Calu3 (cell line): ENCODE measurements at regions of chr16 and their contacts with region 1.

Region 1: GRCh38 chr16:52191531-52192134 is 355.3 kb downstream of the TOX3 start:
- DNase-seq: peak; percentile 80
- H3K4me3 Mint-ChIP-seq: no peak overlapping the region
- H3K27ac Mint-ChIP-seq: no peak overlapping the region
- H3K4me1 Mint-ChIP-seq: peaks cover 11% of the 10 kb centered on the region
- H3K27me3 Mint-ChIP-seq: no peaks in the 10 kb centered on the region
- CTCF ChIP-seq: peak; percentile 89

Region 2: DNA sequence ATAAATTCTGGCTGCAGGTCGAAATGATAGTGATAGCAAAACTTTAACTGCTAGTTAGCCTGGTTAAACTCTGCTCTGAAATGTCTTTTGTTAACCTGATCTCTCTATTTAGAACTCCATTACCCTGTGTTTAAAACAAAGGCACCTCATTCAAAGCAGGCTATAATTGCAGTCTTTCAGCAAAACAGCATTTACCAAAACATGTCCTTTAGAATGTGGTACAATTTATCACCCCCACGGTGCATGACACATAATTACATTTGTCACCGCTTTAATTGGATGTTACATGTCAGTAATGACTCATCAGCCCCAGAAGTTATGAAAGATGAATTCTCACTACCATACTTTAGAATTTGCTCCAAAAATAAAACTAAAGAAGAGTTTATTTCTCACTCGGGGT is 59.9 kb after region 1 on chr16:
- CTCF ChIA-PET with region 1: interaction called, 9 read pairs
- intact Hi-C with region 1: loop called (anchors 2 kb)
- DNase-seq: no peak
- H3K4me3 Mint-ChIP-seq: no peak overlapping the region
- H3K27ac Mint-ChIP-seq: no peak overlapping the region
- H3K4me1 Mint-ChIP-seq: peaks cover 55% of the 10 kb centered on the region
- H3K27me3 Mint-ChIP-seq: no peaks in the 10 kb centered on the region
- CTCF ChIP-seq: no peak

Region 3: DNA sequence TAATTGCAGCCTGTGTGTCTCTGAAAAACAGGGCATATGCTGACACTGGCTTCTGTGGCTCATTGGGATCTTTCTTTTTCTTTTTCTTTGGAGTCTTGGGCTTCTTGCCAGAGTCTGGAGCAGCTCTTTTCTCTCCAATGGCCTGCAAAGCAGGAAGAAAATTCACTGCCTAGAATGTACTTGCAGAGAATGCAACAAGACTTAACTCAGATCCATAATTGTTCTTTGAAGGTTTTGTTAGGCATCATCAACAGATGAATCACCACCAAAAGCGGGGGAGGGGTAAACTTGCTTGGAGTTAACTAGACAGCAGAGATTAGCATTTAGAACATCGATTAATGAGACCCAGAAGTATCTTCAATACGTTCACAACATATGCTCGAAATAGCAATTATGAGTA is 254.4 kb after region 1 on chr16:
- CTCF ChIA-PET with region 1: interaction called, 3 read pairs
- intact Hi-C with region 1: loop called (anchors 5 kb)
- DNase-seq: peak; percentile 43
- H3K4me3 Mint-ChIP-seq: no peak overlapping the region
- H3K27ac Mint-ChIP-seq: no peak overlapping the region
- H3K4me1 Mint-ChIP-seq: peaks cover 45% of the 10 kb centered on the region
- H3K27me3 Mint-ChIP-seq: no peaks in the 10 kb centered on the region
- CTCF ChIP-seq: no peak

Region 4: GRCh38 chr16:52553322-52553721 is 361.7 kb after region 1 on chr16:
- CTCF ChIA-PET with region 1: no interaction called
- intact Hi-C with region 1: no loop called
- DNase-seq: no peak
- H3K4me3 Mint-ChIP-seq: no peak overlapping the region
- H3K27ac Mint-ChIP-seq: no peak overlapping the region
- H3K4me1 Mint-ChIP-seq: peaks cover 54% of the 10 kb centered on the region
- H3K27me3 Mint-ChIP-seq: no peaks in the 10 kb centered on the region
- CTCF ChIP-seq: peak; percentile 59

Region 5: DNA sequence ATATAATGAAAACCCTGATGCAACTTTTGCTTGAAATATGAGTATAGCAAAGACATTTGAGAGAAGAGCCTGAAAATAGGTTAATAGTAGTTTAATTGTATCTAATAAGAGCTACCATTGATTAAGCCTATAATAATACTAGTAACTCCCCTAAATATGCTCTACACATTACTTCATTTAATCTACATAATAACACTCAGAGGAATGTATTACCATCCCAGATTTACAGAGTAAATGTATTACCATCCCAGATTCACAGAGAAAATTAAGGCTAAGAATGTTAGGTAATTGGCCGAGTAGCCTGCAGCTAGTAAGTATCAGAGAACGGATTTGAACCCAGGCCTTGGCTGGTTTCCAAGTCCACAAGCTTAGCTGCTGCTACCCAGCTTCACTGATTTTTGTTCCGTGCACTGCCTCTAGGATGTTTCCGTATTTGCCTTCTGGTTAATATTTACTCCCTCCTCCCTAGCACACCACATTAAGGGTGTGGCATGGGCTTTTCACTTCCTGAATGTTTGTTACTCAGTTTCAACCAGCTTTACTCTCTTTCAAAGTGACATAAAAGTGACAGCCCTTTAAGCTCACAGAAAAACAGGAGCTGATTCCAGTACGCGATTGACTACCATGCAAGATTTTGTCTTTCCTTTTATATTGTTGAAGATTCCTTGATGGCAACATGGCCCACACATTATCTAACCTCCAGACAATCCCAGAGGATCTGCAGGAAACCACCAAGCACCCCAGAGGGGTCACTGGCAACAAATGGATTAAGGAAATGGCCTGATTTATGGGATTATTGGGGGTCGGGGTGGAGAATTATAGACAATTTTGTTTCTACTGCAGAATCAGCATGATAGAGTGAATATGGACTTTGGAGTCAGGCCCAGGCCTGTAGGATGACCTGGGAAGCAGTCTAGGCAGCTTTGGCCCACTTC is 382.0 kb after region 1 on chr16:
- CTCF ChIA-PET with region 1: no interaction called
- intact Hi-C with region 1: loop called (anchors 5 kb)
- DNase-seq: peak; percentile 78
- H3K4me3 Mint-ChIP-seq: peak overlapping the region; percentile 1
- H3K27ac Mint-ChIP-seq: peak overlapping the region; percentile 54
- H3K4me1 Mint-ChIP-seq: peaks cover 89% of the 10 kb centered on the region
- H3K27me3 Mint-ChIP-seq: no peaks in the 10 kb centered on the region
- CTCF ChIP-seq: no peak

Region 6: GRCh38 chr16:52912565-52913173 is 721.0 kb after region 1 on chr16:
- CTCF ChIA-PET with region 1: interaction called, 24 read pairs
- intact Hi-C with region 1: loop called (anchors 1 kb)
- DNase-seq: peak; percentile 82
- H3K4me3 Mint-ChIP-seq: no peak overlapping the region
- H3K27ac Mint-ChIP-seq: no peak overlapping the region
- H3K4me1 Mint-ChIP-seq: peaks cover 7% of the 10 kb centered on the region
- H3K27me3 Mint-ChIP-seq: no peaks in the 10 kb centered on the region
- CTCF ChIP-seq: peak; percentile 89